IMR-90 (cell line): ENCODE measurements at regions of chrX and their contacts with region 1.

Region 1: DNA sequence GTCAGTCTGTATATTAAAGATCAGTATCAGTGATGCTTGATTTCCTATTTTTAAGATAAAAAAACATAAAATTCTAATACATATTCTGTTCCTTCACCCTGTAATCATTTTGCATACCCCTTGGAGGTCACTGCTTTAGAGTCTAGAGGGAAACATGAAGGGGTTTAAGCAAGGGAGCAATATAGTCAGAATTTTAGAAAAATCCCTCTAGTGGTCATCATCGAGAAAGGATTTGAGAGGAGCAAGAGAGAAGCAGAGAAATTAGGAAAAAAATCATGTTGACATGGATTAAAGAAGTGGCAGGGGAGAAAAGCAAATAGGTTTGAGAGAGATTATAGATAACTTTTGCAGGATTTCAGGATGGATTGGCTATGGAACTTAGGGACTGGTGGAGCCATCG is 11.1 kb downstream of the APEX2 start:
- DNase-seq: peak; percentile 4
- ATAC-seq: 0 out of 2 replicates have a peak, but pooled peaks have one; percentile 35
- H3K4me3 ChIP-seq: no peak overlapping the region
- H3K27ac ChIP-seq: no peak overlapping the region
- H3K4me1 ChIP-seq: peaks cover 4% of the 10 kb centered on the region
- H3K27me3 ChIP-seq: peaks cover 2% of the 10 kb centered on the region; the same call in 1 of the 2 replicates
- CTCF ChIP-seq: peak; percentile 30
- POLR2A ChIP-seq: no peak
- RAD21 ChIP-seq: no peak

Region 2: GRCh38 chrX:54950730-54951375 is 60.4 kb before region 1 on chrX:
- CTCF ChIA-PET with region 1: no interaction called
- POLR2A ChIA-PET with region 1: no interaction called
- dilution Hi-C with region 1: no loop called
- in situ Hi-C with region 1: loop called (anchors 10 kb)
- intact Hi-C with region 1: no loop called
- DNase-seq: no peak
- ATAC-seq: no peak
- H3K4me3 ChIP-seq: no peak overlapping the region
- H3K27ac ChIP-seq: no peak overlapping the region
- H3K4me1 ChIP-seq: no peaks in the 10 kb centered on the region
- H3K27me3 ChIP-seq: peaks cover 2% of the 10 kb centered on the region; the same call in 1 of the 2 replicates
- CTCF ChIP-seq: no peak
- POLR2A ChIP-seq: no peak
- RAD21 ChIP-seq: no peak